Left ventricle myocardium inferior (tissue), 1 donor: ENCODE measurements at regions of chr4 and their contacts with region 1.

Region 1: GRCh38 chr4:1260418-1261106 is 11.6 kb upstream of the CTBP1 start:
- DNase-seq: no peak
- H3K4me3 ChIP-seq: no peak overlapping the region
- H3K27ac ChIP-seq: no peak overlapping the region
- H3K4me1 ChIP-seq: no peaks in the 10 kb centered on the region
- H3K27me3 ChIP-seq: no peaks in the 10 kb centered on the region
- CTCF ChIP-seq: no peak

Region 2: GRCh38 chr4:1130316-1131186 is 130.0 kb before region 1 on chr4:
- intact Hi-C with region 1: loop called (anchors 10 kb)
- DNase-seq: peak; percentile 44
- H3K4me3 ChIP-seq: no peak overlapping the region
- H3K27ac ChIP-seq: no peak overlapping the region
- H3K4me1 ChIP-seq: peaks cover 6% of the 10 kb centered on the region
- H3K27me3 ChIP-seq: peaks cover 21% of the 10 kb centered on the region
- CTCF ChIP-seq: peak; percentile 99

Region 3: GRCh38 chr4:1167247-1167949 is 93.2 kb before region 1 on chr4:
- intact Hi-C with region 1: loop called (anchors 10 kb)
- DNase-seq: peak; percentile 83
- H3K4me3 ChIP-seq: peak overlapping the region; percentile 72
- H3K27ac ChIP-seq: peak overlapping the region; percentile 32
- H3K4me1 ChIP-seq: peaks cover 38% of the 10 kb centered on the region
- H3K27me3 ChIP-seq: peaks cover 37% of the 10 kb centered on the region
- CTCF ChIP-seq: peak; percentile 97